GM18951 (cell line): ENCODE measurements at regions of chrX and their contacts with region 1.

Region 1: GRCh38 chrX:2145692-2146367 is 354.9 kb downstream of the DHRSX start:
- POLR2A ChIP-seq: no peak

Region 2: DNA sequence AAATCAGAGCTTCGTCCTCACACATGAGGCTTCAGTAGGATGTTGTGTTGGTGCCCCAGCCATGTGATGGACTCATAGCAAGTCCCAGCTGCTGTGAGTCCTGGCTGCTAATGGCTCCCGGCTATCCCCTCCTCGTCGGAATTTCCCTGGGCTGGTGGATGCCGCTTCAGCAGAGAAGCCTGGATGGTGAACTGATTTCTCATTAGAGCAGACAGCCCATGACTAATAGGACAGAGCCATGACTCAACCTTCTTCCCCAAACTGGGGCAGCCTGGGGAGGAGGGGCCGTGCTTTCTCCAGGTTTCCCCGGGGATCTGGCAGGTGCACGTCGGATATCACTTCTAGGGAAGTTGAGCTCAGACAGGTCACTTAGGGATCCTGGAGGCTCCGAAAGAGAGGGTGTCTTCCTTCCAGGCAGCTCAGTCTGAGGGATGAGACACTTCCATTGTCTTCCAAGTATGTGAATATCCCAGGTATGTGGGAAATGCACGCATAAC is 418.3 kb before region 1 on chrX:
- in situ Hi-C with region 1: loop called (anchors 25 kb)
- POLR2A ChIP-seq: no peak

Region 3: GRCh38 chrX:1784773-1785172 is 361.1 kb before region 1 on chrX:
- in situ Hi-C with region 1: loop called (anchors 10 kb)
- POLR2A ChIP-seq: no peak